CD14-positive monocyte (primary cell): ENCODE measurements at regions of chr1 and their contacts with region 1.

Region 1: DNA sequence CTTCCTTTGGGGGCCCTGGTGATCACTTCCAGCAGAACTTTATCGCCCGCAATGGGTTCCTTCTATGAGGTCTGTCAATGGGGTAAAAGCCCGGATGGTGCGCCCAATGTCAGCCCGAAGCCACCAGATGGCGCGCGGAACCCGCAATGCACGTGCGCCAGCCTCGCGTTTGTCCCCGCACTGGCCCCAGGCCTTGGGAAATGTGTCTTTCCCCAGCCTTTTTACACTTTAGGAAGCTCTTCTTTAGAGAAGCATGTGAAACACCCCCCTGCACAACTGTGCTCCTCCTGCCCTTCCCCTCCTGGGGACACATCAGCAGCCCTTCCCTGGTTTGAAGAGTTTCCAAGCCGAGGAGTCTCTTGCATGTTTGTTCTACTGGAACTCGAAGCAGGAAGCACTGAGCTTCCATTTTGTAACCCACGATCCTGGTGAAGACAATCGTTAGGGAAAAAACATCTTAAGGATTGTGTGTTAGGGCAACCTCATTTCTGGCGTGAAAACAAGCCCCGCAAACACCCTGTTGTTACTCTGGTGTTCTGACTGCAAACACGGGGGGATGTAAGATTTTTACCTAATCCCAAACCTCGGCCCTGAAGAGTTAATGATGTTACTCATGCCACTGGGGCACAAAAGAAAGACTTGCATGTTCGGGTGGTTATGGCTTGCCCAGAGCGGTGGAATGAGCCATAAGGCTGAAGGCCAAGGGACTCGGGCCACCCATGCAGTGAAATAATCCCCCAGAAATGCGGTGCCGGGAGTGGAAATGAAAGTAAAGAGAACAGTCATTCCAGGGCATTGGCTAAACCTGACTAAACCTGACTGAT is 20.4 kb upstream of the TARBP1 start:
- DNase-seq: peak; percentile 76 to 85 (median 83)
- H3K4me3 ChIP-seq: peak overlapping the region; percentile 10 to 66 (median 23)
- H3K4me3 Mint-ChIP-seq: peak overlapping the region; percentile 72 to 88
- H3K27ac ChIP-seq: peak overlapping the region; percentile 72 to 86
- H3K27ac Mint-ChIP-seq: peak overlapping the region; percentile 86 to 98 (median 94)
- H3K4me1 ChIP-seq: peaks cover 27 to 31% of the 10 kb centered on the region in 2 donors
- H3K4me1 Mint-ChIP-seq: peaks cover 44% of the 10 kb centered on the region
- H3K27me3 ChIP-seq: no peaks in the 10 kb centered on the region
- H3K27me3 Mint-ChIP-seq: peaks cover 1 to 3% (median 2%) of the 10 kb centered on the region in 3 donors
- CTCF ChIP-seq: peak; percentile 91

Region 2: GRCh38 chr1:234458352-234459017 is 40.8 kb before region 1 on chr1:
- intact Hi-C with region 1: no loop called
- DNase-seq: no peak
- H3K4me3 ChIP-seq: no peak overlapping the region
- H3K4me3 Mint-ChIP-seq: no peak overlapping the region
- H3K27ac ChIP-seq: no peak overlapping the region
- H3K27ac Mint-ChIP-seq: no peak overlapping the region
- H3K4me1 ChIP-seq: no peaks in the 10 kb centered on the region
- H3K4me1 Mint-ChIP-seq: peaks cover 2% of the 10 kb centered on the region
- H3K27me3 ChIP-seq: no peaks in the 10 kb centered on the region
- H3K27me3 Mint-ChIP-seq: no peaks in the 10 kb centered on the region
- CTCF ChIP-seq: no peak

Region 3: GRCh38 chr1:234512451-234512861 is 13.1 kb after region 1 on chr1:
- intact Hi-C with region 1: loop called in 1 of 2 experiments (anchors 2 kb)
- DNase-seq: peak; percentile 72 to 79 (median 73)
- H3K4me3 ChIP-seq: peak overlapping the region; percentile 42 to 75 (median 61)
- H3K4me3 Mint-ChIP-seq: peak overlapping the region; percentile 76 to 91
- H3K27ac ChIP-seq: peak overlapping the region; percentile 70 to 80
- H3K27ac Mint-ChIP-seq: peak overlapping the region; percentile 90 to 96 (median 95)
- H3K4me1 ChIP-seq: peaks cover 58 to 60% of the 10 kb centered on the region in 2 donors
- H3K4me1 Mint-ChIP-seq: peaks cover 53% of the 10 kb centered on the region
- H3K27me3 ChIP-seq: no peaks in the 10 kb centered on the region
- H3K27me3 Mint-ChIP-seq: peaks cover 0 to 5% (median 2%) of the 10 kb centered on the region in 3 donors
- CTCF ChIP-seq: no peak

Region 4: DNA sequence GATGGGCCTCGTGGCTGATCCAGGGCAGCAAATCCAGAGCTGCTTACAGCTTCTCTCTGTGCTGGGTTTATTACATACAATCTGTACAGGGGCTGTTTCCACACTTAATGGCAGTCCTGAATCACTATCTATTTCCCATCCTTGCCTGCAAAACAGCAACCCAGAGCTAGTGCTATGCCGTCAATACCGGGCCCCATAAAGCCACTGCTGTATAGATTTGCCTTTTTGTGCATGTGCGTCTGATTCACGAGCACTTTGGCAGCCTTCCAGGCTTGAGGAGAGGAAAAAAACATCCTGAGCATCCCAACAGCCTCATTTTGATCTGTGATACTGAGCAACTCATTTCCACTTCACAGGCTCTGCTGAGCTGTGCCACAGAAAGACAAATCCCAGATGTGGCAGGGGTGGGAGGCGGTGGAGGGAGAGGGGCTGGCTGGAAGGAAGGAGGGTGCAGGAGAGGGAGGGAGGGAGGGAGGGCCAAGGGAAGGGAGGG is 44.8 kb after region 1 on chr1:
- intact Hi-C with region 1: loop called in 1 of 2 experiments (anchors 5 kb)
- DNase-seq: peak; percentile 34 to 53 (median 38)
- H3K4me3 ChIP-seq: no peak overlapping the region
- H3K4me3 Mint-ChIP-seq: no peak overlapping the region
- H3K27ac ChIP-seq: no peak overlapping the region
- H3K27ac Mint-ChIP-seq: peak overlapping the region in 5 of 7 donors; percentile 11 to 45 (median 24)
- H3K4me1 ChIP-seq: peaks cover 6% of the 10 kb centered on the region in 2 donors
- H3K4me1 Mint-ChIP-seq: peaks cover 19% of the 10 kb centered on the region
- H3K27me3 ChIP-seq: no peaks in the 10 kb centered on the region
- H3K27me3 Mint-ChIP-seq: peaks cover 4 to 11% (median 5%) of the 10 kb centered on the region in 3 donors
- CTCF ChIP-seq: no peak

Region 5: GRCh38 chr1:234599617-234600417 is 100.5 kb after region 1 on chr1:
- intact Hi-C with region 1: loop called in 1 of 2 experiments (anchors 2 kb)
- DNase-seq: peak; percentile 61 to 70 (median 65)
- H3K4me3 ChIP-seq: peak overlapping the region; percentile 46 to 95 (median 52)
- H3K4me3 Mint-ChIP-seq: peak overlapping the region; percentile 88 to 100
- H3K27ac ChIP-seq: peak overlapping the region; percentile 81 to 89
- H3K27ac Mint-ChIP-seq: peak overlapping the region; percentile 93 to 100 (median 93)
- H3K4me1 ChIP-seq: peaks cover 57 to 66% of the 10 kb centered on the region in 2 donors
- H3K4me1 Mint-ChIP-seq: peaks cover 42% of the 10 kb centered on the region
- H3K27me3 ChIP-seq: no peaks in the 10 kb centered on the region
- H3K27me3 Mint-ChIP-seq: peaks cover 0 to 2% (median 0%) of the 10 kb centered on the region in 3 donors
- CTCF ChIP-seq: no peak

Region 6: GRCh38 chr1:234842726-234843641 is 343.7 kb after region 1 on chr1:
- intact Hi-C with region 1: loop called in 1 of 2 experiments (anchors 10 kb)
- DNase-seq: peak in 2 of 3 donors; percentile 44 to 79
- H3K4me3 ChIP-seq: peak overlapping the region in 1 of 3 experiments; percentile 41
- H3K4me3 Mint-ChIP-seq: peak overlapping the region; percentile 64 to 65
- H3K27ac ChIP-seq: peak overlapping the region; percentile 98 to 100
- H3K27ac Mint-ChIP-seq: peak overlapping the region; percentile 97 to 99 (median 98)
- H3K4me1 ChIP-seq: peaks cover 78 to 91% of the 10 kb centered on the region in 2 donors
- H3K4me1 Mint-ChIP-seq: peaks cover 95% of the 10 kb centered on the region
- H3K27me3 ChIP-seq: no peaks in the 10 kb centered on the region
- H3K27me3 Mint-ChIP-seq: no peaks in the 10 kb centered on the region
- CTCF ChIP-seq: no peak